Activated T-helper 1 cell treated with anti-CD3 and anti-CD28 coated beads, Interleukin-12 subunit alpha, Interleukin-12 subunit beta, Interleukin-2, Interleukin-4 antibody, amounts not matched to agents 30 ng/mL and 10 ng/mL and 1 ng/mL, durations not matched to agents 14 hours and 24 hours and 36 hours (primary cell): ENCODE measurements at regions of chr3 and their contacts with region 1.

Region 1: GRCh38 chr3:45995236-45996192 is at the start of gene FYCO1:
- DNase-seq: peak; percentile 82
- H3K4me3 Mint-ChIP-seq: peak within 1 kb of the TSS; percentile 87
- H3K27ac Mint-ChIP-seq: peak within 1 kb of the TSS; percentile 96
- H3K4me1 Mint-ChIP-seq: peaks cover 64% of the 10 kb centered on the region
- H3K27me3 Mint-ChIP-seq: peaks cover 3% of the 10 kb centered on the region
- total RNA-seq, gene FYCO1: 16.1 and 16.3 TPM in 2 replicates

Region 2: GRCh38 chr3:45776611-45777010 is 218.9 kb before region 1 on chr3:
- intact Hi-C with region 1: no loop called
- DNase-seq: no peak
- H3K4me3 Mint-ChIP-seq: no peak overlapping the region
- H3K27ac Mint-ChIP-seq: no peak overlapping the region
- H3K4me1 Mint-ChIP-seq: peaks cover 9% of the 10 kb centered on the region
- H3K27me3 Mint-ChIP-seq: peaks cover 36% of the 10 kb centered on the region

Region 3: GRCh38 chr3:45915518-45916231 is 79.8 kb before region 1 on chr3:
- intact Hi-C with region 1: loop called (anchors 1 kb)
- DNase-seq: peak; percentile 65
- H3K4me3 Mint-ChIP-seq: peak overlapping the region; percentile 58
- H3K27ac Mint-ChIP-seq: peak overlapping the region; percentile 83
- H3K4me1 Mint-ChIP-seq: peaks cover 33% of the 10 kb centered on the region
- H3K27me3 Mint-ChIP-seq: peaks cover 30% of the 10 kb centered on the region

Region 4: DNA sequence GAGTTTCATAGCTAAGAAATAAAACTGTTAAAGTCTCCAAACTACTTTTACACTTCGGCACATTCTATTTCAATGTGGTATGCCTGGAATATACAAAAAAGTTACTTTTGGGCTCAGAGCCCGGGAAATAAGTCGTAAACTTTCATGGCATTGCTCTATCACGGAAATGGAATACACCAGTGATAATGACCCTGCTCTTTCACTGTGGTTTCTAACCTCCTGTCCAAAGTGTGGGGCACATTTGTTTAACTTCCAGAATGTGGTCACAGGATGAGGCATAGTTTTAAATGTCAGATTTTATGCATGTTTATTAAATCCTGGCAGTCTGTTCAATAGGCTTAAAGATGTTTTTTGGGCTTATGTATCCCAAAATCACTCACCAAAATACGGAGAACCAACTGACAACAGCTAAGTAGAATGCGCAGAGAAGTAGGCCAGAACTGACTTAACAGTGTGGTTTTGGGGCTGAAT is 47.2 kb before region 1 on chr3:
- intact Hi-C with region 1: loop called (anchors 1 kb)
- DNase-seq: no peak
- H3K4me3 Mint-ChIP-seq: peak overlapping the region; percentile 31
- H3K27ac Mint-ChIP-seq: peak overlapping the region; percentile 62
- H3K4me1 Mint-ChIP-seq: peaks cover 98% of the 10 kb centered on the region
- H3K27me3 Mint-ChIP-seq: no peaks in the 10 kb centered on the region

Region 5: DNA sequence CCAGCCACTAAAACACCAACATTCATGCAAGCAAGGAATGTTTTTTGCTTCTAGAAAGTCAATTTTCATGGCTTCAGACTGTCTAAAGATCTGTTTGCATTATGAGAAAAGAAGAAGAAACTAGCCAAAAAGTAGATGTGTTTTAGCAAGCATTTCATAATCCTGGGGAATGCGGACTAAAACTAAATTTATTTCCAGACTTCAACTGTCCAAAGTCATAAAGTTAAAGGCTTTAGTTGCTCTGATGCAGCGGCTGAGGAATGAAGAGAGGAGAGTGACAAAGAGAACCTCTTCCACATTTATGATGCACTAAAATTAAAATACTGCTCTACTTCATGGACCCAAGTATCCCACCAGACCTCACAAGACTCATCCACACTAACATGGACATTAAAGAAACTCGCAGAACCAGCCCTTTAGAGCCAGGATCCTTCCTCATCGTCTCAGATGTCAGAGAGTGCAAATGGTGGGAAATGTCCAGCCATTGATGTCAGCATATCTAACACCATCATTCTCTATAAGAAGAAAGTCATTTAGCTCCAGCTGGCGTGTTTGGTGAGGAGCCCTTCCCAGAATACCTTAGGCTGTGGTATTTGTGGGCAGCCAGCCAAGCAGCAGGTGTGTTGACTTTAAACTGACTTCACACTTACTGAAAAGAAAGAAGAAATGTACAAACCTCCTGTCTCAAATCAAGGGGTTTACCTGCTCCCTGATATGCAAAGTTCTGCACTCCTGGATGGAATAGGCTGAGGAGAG is 17.3 kb before region 1 on chr3:
- intact Hi-C with region 1: loop called (anchors 1 kb)
- DNase-seq: peak; percentile 72
- H3K4me3 Mint-ChIP-seq: peak overlapping the region; percentile 86
- H3K27ac Mint-ChIP-seq: peak overlapping the region; percentile 98
- H3K4me1 Mint-ChIP-seq: peaks cover 89% of the 10 kb centered on the region
- H3K27me3 Mint-ChIP-seq: no peaks in the 10 kb centered on the region

Region 6: GRCh38 chr3:46017720-46018119 is 22.2 kb after region 1 on chr3:
- intact Hi-C with region 1: loop called (anchors 1 kb)
- DNase-seq: no peak
- H3K4me3 Mint-ChIP-seq: peak overlapping the region; percentile 21
- H3K27ac Mint-ChIP-seq: peak overlapping the region; percentile 80
- H3K4me1 Mint-ChIP-seq: peaks cover 58% of the 10 kb centered on the region
- H3K27me3 Mint-ChIP-seq: peaks cover 4% of the 10 kb centered on the region

Region 7: GRCh38 chr3:46049116-46049515 is 53.6 kb after region 1 on chr3:
- intact Hi-C with region 1: no loop called
- DNase-seq: no peak
- H3K4me3 Mint-ChIP-seq: no peak overlapping the region
- H3K27ac Mint-ChIP-seq: no peak overlapping the region
- H3K4me1 Mint-ChIP-seq: peaks cover 45% of the 10 kb centered on the region
- H3K27me3 Mint-ChIP-seq: peaks cover 18% of the 10 kb centered on the region

Region 8: GRCh38 chr3:46065294-46065721 is 69.8 kb after region 1 on chr3:
- intact Hi-C with region 1: loop called (anchors 1 kb)
- DNase-seq: peak; percentile 64
- H3K4me3 Mint-ChIP-seq: peak overlapping the region; percentile 63
- H3K27ac Mint-ChIP-seq: peak overlapping the region; percentile 59
- H3K4me1 Mint-ChIP-seq: peaks cover 54% of the 10 kb centered on the region
- H3K27me3 Mint-ChIP-seq: peaks cover 41% of the 10 kb centered on the region

Region 9: DNA sequence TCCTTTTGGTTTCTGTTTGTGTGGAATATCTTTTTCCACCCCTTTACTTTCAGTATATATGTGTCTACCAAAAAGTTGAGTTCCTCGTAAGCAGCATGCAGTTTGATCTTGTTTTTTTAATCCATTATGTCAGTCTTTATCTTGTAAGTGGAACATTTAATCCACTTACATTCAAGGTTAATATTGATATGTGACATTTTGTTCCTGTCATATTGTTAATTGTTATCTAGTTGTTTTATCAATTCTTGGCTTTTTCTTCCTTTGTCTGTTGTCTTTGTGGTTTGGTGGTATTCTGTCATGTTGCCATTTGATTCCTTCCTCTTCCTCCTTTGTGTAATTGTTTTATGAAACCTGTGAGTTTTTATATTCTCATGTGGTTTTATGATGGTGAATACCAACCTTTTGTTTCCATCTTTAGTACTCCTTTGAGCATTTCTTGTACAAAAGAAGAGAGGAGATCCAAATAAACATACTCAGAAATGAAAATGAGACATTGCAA is 75.1 kb after region 1 on chr3:
- intact Hi-C with region 1: loop called (anchors 1 kb)
- DNase-seq: no peak
- H3K4me3 Mint-ChIP-seq: peak overlapping the region; percentile 53
- H3K27ac Mint-ChIP-seq: peak overlapping the region; percentile 96
- H3K4me1 Mint-ChIP-seq: peaks cover 70% of the 10 kb centered on the region
- H3K27me3 Mint-ChIP-seq: peaks cover 12% of the 10 kb centered on the region

Region 10: GRCh38 chr3:46080969-46081345 is 85.4 kb after region 1 on chr3:
- intact Hi-C with region 1: no loop called
- DNase-seq: no peak
- H3K4me3 Mint-ChIP-seq: no peak overlapping the region
- H3K27ac Mint-ChIP-seq: no peak overlapping the region
- H3K4me1 Mint-ChIP-seq: peaks cover 76% of the 10 kb centered on the region
- H3K27me3 Mint-ChIP-seq: peaks cover 8% of the 10 kb centered on the region

Region 11: DNA sequence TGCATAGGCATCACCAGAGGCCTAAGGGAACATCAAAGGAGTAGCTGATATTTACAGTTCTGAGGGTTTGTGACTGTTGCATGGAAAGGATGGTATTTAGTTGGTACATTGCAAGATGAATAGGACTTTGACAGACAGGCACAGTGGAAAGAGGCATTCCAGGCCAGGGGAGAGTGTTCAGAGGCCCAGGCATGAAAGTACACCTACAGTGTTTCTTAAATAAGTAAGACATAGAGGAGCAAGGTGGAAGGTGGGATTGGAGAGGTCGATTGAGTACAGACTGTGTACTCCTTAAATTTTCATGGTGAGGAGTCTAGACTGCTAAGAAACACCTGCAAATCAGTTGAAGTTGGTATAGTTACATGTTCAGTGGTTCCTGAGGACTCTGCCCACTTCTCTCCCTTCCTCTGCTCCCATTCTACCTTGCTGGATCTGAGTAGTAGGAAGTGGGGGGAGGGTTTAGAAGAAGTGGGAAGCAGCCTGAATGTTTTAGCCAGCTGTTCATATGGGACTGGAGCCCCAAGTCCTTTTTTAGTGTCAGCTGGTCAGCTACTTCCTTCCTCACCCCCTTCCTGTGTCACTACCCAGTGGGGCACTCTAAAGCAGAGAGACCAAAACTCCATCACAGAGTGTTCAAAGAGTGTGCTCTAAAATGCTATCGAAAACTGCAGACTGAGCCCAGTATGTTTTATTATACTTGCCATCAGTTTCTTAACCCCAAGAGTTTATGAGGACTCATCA is 1301.2 kb after region 1 on chr3:
- intact Hi-C with region 1: no loop called
- DNase-seq: no peak
- H3K4me3 Mint-ChIP-seq: no peak overlapping the region
- H3K27ac Mint-ChIP-seq: peak overlapping the region; percentile 70
- H3K4me1 Mint-ChIP-seq: peaks cover 28% of the 10 kb centered on the region
- H3K27me3 Mint-ChIP-seq: no peaks in the 10 kb centered on the region